ENCODE measurements at regions of chr13 and their contacts with region 1.

Region 1: GRCh38 chr13:46553886-46554858 is 1.2 kb downstream of the LRCH1 start:
- DNase-seq: peak; percentile 79
- H3K4me3 Mint-ChIP-seq: peak overlapping the region; percentile 91
- H3K27ac Mint-ChIP-seq: peak overlapping the region; percentile 86
- H3K4me1 Mint-ChIP-seq: peaks cover 40% of the 10 kb centered on the region
- H3K27me3 Mint-ChIP-seq: no peaks in the 10 kb centered on the region

Region 2: GRCh38 chr13:46492946-46493345 is 61.2 kb before region 1 on chr13:
- CTCF ChIA-PET with region 1: interaction called, 10 read pairs
- intact Hi-C with region 1: loop called (anchors 2 kb)
- DNase-seq: peak; percentile 11
- H3K4me3 Mint-ChIP-seq: no peak overlapping the region
- H3K27ac Mint-ChIP-seq: no peak overlapping the region
- H3K4me1 Mint-ChIP-seq: no peaks in the 10 kb centered on the region
- H3K27me3 Mint-ChIP-seq: no peaks in the 10 kb centered on the region

Region 3: GRCh38 chr13:46577696-46578589 is 23.8 kb after region 1 on chr13:
- CTCF ChIA-PET with region 1: interaction called, 7 read pairs
- intact Hi-C with region 1: loop called (anchors 1 kb)
- DNase-seq: peak; percentile 11
- H3K4me3 Mint-ChIP-seq: no peak overlapping the region
- H3K27ac Mint-ChIP-seq: no peak overlapping the region
- H3K4me1 Mint-ChIP-seq: peaks cover 62% of the 10 kb centered on the region
- H3K27me3 Mint-ChIP-seq: no peaks in the 10 kb centered on the region

Region 4: DNA sequence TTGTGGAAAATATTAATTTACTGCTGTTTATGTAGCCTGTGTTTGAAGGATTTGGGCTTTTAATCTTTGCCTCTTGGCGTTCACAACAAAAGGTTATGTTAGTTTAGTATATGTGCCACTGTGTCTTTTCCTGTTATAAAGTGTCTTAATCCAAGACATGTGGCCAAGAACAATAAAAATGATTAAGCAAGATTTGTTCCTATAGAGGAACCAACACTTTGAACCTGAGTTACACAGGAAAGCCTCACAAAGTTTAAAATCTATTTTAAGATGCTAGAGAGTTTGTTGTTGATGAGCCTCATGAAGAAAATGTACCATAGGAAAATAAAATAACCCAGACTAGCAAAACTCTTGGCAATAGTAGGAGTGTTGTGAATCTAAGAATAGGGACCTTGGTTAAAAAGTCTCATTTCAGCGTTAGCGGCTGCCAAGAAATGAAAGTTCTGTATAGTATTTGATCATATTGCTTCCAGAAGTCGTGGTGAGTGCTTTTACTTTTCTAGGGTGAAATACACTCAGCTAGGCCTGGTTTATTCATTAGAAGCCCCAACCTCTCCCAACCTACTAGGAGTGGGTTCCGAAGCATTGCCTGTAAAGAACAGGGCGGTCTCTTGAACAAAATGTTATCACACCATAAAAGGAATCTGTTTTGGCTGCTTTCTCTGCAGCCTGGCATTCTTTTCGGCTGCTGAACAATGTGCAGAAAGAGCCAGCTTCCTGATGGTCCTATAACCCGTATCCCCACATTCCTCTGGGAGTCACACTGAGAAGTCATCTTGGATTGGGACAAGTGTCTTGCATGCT is 101.4 kb after region 1 on chr13:
- CTCF ChIA-PET with region 1: interaction called, 9 read pairs
- intact Hi-C with region 1: loop called (anchors 1 kb)
- DNase-seq: peak; percentile 12
- H3K4me3 Mint-ChIP-seq: no peak overlapping the region
- H3K27ac Mint-ChIP-seq: no peak overlapping the region
- H3K4me1 Mint-ChIP-seq: peaks cover 36% of the 10 kb centered on the region
- H3K27me3 Mint-ChIP-seq: no peaks in the 10 kb centered on the region

Region 5: GRCh38 chr13:46679369-46680120 is 125.4 kb after region 1 on chr13:
- CTCF ChIA-PET with region 1: interaction called, 13 read pairs
- intact Hi-C with region 1: loop called (anchors 1 kb)
- DNase-seq: peak; percentile 45
- H3K4me3 Mint-ChIP-seq: no peak overlapping the region
- H3K27ac Mint-ChIP-seq: no peak overlapping the region
- H3K4me1 Mint-ChIP-seq: peaks cover 16% of the 10 kb centered on the region
- H3K27me3 Mint-ChIP-seq: no peaks in the 10 kb centered on the region

Region 6: DNA sequence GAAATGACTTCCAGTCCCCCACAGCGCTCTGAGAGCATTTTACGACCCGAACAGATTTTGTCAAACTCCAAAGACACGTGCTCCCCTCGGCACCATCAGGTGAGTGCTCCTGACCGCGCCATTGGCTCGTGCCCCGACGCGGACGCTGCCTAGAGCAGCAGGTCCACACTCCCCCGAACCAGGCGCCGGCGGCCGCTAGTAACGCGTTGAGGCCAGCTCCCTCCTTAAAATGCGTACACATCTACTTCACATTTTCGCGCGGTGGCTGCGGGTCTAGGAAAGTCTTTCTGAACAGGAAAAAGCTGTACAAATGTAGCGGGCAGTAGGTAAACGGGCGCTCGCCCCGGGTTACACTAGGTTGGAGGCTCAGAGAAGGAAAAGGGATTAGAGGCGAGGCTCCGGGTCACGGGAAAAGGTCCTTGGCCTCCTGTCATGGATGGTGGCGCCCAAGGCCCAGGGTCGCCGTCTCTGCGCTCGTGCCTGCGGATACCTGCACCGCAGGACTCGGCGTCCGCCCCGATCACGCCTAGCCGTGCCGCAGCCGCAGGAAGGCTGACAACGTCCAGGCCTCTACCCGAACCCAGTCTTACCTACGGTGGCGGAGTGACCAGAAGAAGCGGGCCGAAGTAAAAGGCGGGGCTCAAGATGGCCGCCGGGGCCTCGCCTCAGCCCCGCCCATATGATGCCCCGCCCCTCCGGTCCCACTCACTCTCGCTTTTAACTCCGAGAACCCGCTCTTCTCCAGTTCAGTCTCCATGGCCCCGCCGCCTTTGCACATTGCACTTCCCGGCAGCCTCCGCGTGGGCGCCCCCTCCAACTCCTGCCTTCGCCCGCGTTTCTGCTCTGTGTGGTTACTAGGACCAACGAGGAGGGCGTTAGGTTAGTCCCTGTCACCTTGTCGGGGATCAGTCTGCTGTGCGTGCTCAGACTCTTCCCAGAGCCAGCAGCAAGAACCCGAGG is 242.6 kb after region 1 on chr13 and contains the start of gene ESD:
- CTCF ChIA-PET with region 1: interaction called, 4 read pairs
- intact Hi-C with region 1: loop called (anchors 1 kb)
- DNase-seq: peak; percentile 98
- H3K4me3 Mint-ChIP-seq: peak within 1 kb of the TSS; percentile 93
- H3K27ac Mint-ChIP-seq: peak within 1 kb of the TSS; percentile 95
- H3K4me1 Mint-ChIP-seq: peaks cover 32% of the 10 kb centered on the region
- H3K27me3 Mint-ChIP-seq: no peaks in the 10 kb centered on the region
- total RNA-seq, gene ESD: 150 to 153 TPM

Measured in activated naive CD4-positive, alpha-beta T cell treated with anti-CD3 and anti-CD28 coated beads for 36 hours (primary cell).